K562 (cell line): ENCODE measurements at regions of chr10 and their contacts with region 1.

Region 1: DNA sequence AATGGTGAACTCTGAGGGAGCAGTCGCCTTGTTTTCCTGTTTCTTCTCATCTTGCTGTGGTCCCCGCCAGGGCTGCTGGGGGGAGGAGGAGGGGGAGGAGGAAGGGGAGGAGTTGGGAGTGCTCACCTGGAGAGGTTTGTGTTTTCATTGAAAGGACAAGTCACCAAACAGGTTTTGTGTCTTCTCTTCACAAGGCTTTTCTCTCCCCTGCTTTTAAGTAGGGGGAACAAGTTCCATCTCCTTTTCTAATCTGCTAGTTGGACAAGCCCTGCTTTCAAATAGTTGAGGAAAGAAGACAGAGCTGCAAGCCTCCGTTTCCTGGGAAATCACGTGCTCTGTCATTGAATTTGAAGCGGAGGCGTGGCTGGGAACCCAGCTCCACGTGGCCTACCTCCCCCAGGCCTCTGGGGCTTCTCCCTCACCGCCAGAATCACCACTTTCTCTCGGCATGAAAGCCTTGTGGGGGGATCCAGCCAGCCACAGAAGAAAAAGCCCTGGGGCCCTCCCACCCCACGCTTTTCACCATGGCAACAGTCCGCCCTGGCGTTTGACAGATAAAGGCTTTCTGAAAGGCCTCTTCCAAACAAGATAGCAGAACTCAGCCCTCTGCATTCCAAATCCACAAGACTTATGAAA is 51.5 kb downstream of the PROSER2 start:
- DNase-seq: peak; percentile 89 to 95 (median 92)
- ATAC-seq: peak; percentile 83
- H3K4me3 ChIP-seq: peak overlapping the region; percentile 1; the same call in 1 of the 2 replicates
- H3K27ac ChIP-seq: peak overlapping the region; percentile 80
- H3K4me1 ChIP-seq: peaks cover 39 to 70% of the 10 kb centered on the region in 2 experiments
- H3K27me3 ChIP-seq: no peaks in the 10 kb centered on the region
- CTCF ChIP-seq: no peak
- EP300 ChIP-seq: peak; percentile 58
- POLR2A ChIP-seq: no peak
- RAD21 ChIP-seq: no peak

Region 2: GRCh38 chr10:11898372-11899066 is 23.9 kb after region 1 on chr10:
- CTCF ChIA-PET with region 1: no interaction called
- POLR2A ChIA-PET with region 1: interaction called, 6 read pairs
- in situ Hi-C with region 1: no loop called
- intact Hi-C with region 1: loop called (anchors 1 kb)
- DNase-seq: peak; percentile 94 to 98 (median 96)
- ATAC-seq: peak; percentile 82
- H3K4me3 ChIP-seq: peak overlapping the region; percentile 47
- H3K27ac ChIP-seq: peak overlapping the region; percentile 98
- H3K4me1 ChIP-seq: peaks cover 33 to 60% of the 10 kb centered on the region in 2 experiments
- H3K27me3 ChIP-seq: no peaks in the 10 kb centered on the region
- CTCF ChIP-seq: no peak
- EP300 ChIP-seq: peak; percentile 87
- POLR2A ChIP-seq: peak; percentile 96
- RAD21 ChIP-seq: no peak